ENCODE measurements at regions of chr7 and their contacts with region 1.

Region 1: DNA sequence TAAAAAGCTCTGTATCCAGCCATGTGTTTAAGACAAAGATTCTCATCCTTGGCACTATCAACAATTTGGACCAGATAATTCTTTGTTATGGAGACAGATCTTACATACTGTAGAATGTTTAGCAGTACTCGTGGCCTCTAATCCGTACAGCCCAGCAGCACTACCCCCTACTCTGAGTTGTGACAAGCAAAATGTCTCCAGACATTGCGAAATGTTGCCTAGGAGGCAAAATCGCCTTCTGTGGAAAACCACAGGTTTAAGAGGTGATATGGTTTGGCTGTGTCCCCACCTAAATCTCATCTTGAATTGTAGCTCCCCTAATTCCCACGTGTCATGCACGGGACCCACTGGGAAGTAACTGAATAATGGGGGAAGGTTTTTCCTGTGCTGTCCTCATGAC is 186.7 kb downstream of the CHCHD3 start:
- DNase-seq: no peak
- H3K4me3 ChIP-seq: no peak overlapping the region
- H3K27ac ChIP-seq: no peak overlapping the region
- H3K4me1 ChIP-seq: no peaks in the 10 kb centered on the region
- H3K27me3 ChIP-seq: no peaks in the 10 kb centered on the region
- CTCF ChIP-seq: no peak
- EP300 ChIP-seq: no peak
- POLR2A ChIP-seq: no peak

Region 2: GRCh38 chr7:132557489-132558044 is 337.7 kb before region 1 on chr7:
- in situ Hi-C with region 1: no loop called
- intact Hi-C with region 1: no loop called
- DNase-seq: no peak
- H3K4me3 ChIP-seq: no peak overlapping the region
- H3K27ac ChIP-seq: no peak overlapping the region
- H3K4me1 ChIP-seq: no peaks in the 10 kb centered on the region
- H3K27me3 ChIP-seq: no peaks in the 10 kb centered on the region
- CTCF ChIP-seq: no peak
- EP300 ChIP-seq: no peak
- POLR2A ChIP-seq: no peak

Region 3: GRCh38 chr7:132876576-132876975 is 18.7 kb before region 1 on chr7:
- in situ Hi-C with region 1: no loop called
- intact Hi-C with region 1: loop called (anchors 1 kb)
- DNase-seq: no peak
- H3K4me3 ChIP-seq: no peak overlapping the region
- H3K27ac ChIP-seq: no peak overlapping the region
- H3K4me1 ChIP-seq: peaks cover 0 to 18% (median 0%) of the 10 kb centered on the region in 4 donors
- H3K27me3 ChIP-seq: no peaks in the 10 kb centered on the region
- CTCF ChIP-seq: no peak
- EP300 ChIP-seq: no peak
- POLR2A ChIP-seq: no peak